MCF 10A (cell line): ENCODE measurements at regions of chr12 and their contacts with region 1.

Region 1: DNA sequence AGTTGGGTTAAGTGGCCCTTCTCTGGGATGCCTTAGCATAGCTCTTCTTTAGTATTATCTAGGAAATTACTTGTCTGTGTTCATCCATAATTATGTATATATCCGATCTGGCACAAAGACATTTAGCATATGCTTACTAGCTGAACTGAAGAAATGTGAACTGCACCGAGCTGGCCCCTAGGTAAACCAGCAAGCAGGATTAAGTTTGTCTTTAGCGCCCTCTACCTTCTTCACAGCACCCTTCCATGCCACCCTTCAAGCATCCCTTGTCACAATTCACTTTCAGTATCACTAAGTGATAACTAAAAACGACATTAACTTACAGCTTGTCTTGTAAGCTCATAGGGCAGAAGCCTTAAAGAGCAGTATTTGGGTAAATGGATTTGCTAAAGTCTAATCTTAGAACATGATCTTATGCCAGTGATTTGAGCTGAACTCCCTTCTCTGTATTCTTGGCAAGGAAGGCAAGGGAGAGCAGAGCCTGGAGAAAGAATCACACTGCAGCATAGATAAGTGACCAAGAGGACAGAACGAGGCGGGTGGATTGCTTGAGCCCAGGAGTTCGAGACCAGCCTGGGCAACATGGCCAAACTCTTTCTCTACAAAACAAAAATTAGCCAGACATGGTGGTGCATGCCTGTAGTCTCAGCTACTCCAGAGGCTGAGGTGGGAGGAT is 2.6 kb upstream of the HAL start:
- DNase-seq: peak; percentile 68
- H3K4me3 Mint-ChIP-seq: no peak overlapping the region
- H3K27ac Mint-ChIP-seq: no peak overlapping the region
- H3K4me1 Mint-ChIP-seq: peaks cover 21% of the 10 kb centered on the region
- H3K27me3 Mint-ChIP-seq: no peaks in the 10 kb centered on the region
- CTCF ChIP-seq: peak; percentile 57

Region 2: DNA sequence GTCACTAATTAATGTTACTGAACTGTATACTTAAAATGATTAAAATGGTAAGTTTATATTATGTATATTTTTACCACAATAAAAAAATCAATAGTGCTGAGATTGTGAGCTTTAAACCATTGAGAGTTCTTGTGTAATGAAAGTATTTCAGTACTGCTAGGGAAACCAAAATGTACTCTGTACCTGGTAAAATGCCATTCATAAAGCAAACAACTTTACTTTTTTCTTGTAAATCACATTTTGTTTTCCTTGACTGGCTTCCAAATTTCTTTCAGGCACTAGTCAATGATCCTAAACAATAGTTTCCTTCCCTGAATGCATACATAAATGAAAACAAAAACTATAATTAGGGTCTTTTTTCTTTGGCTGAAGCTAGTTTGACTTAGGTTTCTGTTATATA is 169.4 kb before region 1 on chr12:
- CTCF ChIA-PET with region 1: interaction called, 3 read pairs
- POLR2A ChIA-PET with region 1: no interaction called
- intact Hi-C with region 1: loop called (anchors 5 kb)
- DNase-seq: no peak
- H3K4me3 Mint-ChIP-seq: no peak overlapping the region
- H3K27ac Mint-ChIP-seq: no peak overlapping the region
- H3K4me1 Mint-ChIP-seq: no peaks in the 10 kb centered on the region
- H3K27me3 Mint-ChIP-seq: peaks cover 28% of the 10 kb centered on the region
- CTCF ChIP-seq: no peak

Region 3: GRCh38 chr12:95942524-95943329 is 56.0 kb before region 1 on chr12 and contains the start of gene CCDC38:
- CTCF ChIA-PET with region 1: interaction called, 38 read pairs
- POLR2A ChIA-PET with region 1: interaction called, 6 read pairs
- intact Hi-C with region 1: no loop called
- DNase-seq: peak; percentile 72
- H3K4me3 Mint-ChIP-seq: peak within 1 kb of the TSS; percentile 85
- H3K27ac Mint-ChIP-seq: no peak within 1 kb of the TSS
- H3K4me1 Mint-ChIP-seq: no peaks in the 10 kb centered on the region
- H3K27me3 Mint-ChIP-seq: peaks cover 15% of the 10 kb centered on the region
- CTCF ChIP-seq: no peak
- total RNA-seq, gene CCDC38: 0.12 TPM in 1 of 2 replicates, not detected in the other

Region 4: GRCh38 chr12:95974358-95974757 is 24.4 kb before region 1 on chr12:
- CTCF ChIA-PET with region 1: interaction called, 12 read pairs
- POLR2A ChIA-PET with region 1: no interaction called
- intact Hi-C with region 1: no loop called
- DNase-seq: no peak
- H3K4me3 Mint-ChIP-seq: no peak overlapping the region
- H3K27ac Mint-ChIP-seq: no peak overlapping the region
- H3K4me1 Mint-ChIP-seq: peaks cover 5% of the 10 kb centered on the region
- H3K27me3 Mint-ChIP-seq: no peaks in the 10 kb centered on the region
- CTCF ChIP-seq: no peak

Region 5: GRCh38 chr12:96047229-96048211 is 48.8 kb after region 1 on chr12:
- CTCF ChIA-PET with region 1: no interaction called
- POLR2A ChIA-PET with region 1: no interaction called
- intact Hi-C with region 1: no loop called
- DNase-seq: peak; percentile 94
- H3K4me3 Mint-ChIP-seq: peak overlapping the region; percentile 59
- H3K27ac Mint-ChIP-seq: peak overlapping the region; percentile 83
- H3K4me1 Mint-ChIP-seq: peaks cover 36% of the 10 kb centered on the region
- H3K27me3 Mint-ChIP-seq: no peaks in the 10 kb centered on the region
- CTCF ChIP-seq: no peak

Region 6: DNA sequence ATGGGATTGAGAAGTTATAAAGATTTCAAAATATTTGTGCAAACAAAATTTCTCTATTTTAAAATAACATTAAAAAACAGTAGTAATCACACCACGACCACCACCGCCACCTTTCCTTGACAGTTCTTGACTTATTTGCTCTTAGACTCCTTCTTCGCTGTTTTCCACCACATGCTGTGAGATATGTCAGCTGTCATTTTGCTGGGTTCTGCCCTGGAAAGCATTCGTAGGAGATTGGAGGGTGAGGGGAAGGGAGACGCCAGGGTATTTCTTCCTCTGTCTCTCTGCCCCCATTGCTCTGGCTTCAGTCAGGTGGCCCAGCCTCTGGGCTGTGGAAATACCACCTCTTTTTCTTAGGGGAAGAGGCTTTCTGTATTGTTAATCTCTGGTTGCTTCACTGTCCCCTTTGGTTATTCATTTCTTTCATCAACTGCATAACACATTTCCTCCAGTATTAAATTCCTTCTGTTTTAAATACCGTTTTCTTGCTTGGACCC is 1094.5 kb after region 1 on chr12:
- CTCF ChIA-PET with region 1: no interaction called
- POLR2A ChIA-PET with region 1: no interaction called
- intact Hi-C with region 1: no loop called
- DNase-seq: no peak
- H3K4me3 Mint-ChIP-seq: no peak overlapping the region
- H3K27ac Mint-ChIP-seq: no peak overlapping the region
- H3K4me1 Mint-ChIP-seq: no peaks in the 10 kb centered on the region
- H3K27me3 Mint-ChIP-seq: peaks cover 67% of the 10 kb centered on the region
- CTCF ChIP-seq: no peak